CD4-positive, alpha-beta memory T cell (primary cell): ENCODE measurements at regions of chrX and their contacts with region 1.

Region 1: DNA sequence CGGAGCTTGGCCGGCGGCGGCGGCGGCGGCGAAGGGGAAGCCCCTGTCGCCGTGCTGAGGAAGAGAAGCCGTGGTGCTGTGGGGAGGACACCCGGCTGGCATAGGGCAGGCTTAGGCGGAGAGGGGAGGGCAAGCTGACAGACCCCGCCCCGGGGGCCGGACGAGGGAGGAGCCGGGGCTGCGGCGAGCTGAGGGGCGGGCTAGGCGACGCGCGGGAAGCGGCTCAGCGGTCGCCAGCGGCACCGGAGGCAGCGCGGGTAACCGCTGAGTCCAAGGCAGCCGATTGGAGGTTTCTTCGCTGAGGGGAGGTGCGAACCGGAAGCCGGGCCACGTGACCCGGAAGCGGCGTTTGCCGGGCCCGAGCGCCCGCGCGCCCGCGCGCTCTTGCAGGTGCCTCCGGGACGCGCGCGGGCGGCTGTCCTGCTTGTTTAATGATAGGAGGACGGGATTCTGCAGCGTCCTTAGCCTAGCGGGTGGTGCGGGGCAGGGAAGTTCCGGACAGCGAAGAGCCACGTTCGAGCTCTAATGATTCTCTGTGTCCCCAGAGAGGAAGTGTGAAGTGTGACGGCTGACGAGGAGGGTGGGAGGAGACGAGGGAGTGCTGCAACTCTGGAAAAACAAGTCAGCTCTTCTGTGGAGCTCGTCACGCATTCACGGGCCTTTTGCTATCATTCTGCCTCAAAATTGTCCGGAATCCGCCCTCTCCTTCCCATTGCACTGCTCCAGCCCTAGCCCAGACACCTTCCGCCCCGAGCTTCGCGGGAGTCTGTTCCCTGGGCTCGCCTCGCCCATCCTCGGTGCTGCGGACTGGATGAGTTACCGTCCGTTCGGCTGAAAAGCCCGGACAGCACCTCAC is at the start of gene AP1S2:
- DNase-seq: peak; percentile 93 to 100 (median 99)
- H3K4me3 ChIP-seq: peak within 1 kb of the TSS; percentile 57 to 77
- H3K4me3 Mint-ChIP-seq: peak within 1 kb of the TSS; percentile 91 to 98 (median 96)
- H3K27ac ChIP-seq: peak within 1 kb of the TSS; percentile 78
- H3K27ac Mint-ChIP-seq: peak within 1 kb of the TSS; percentile 96 to 99 (median 98)
- H3K4me1 ChIP-seq: peaks cover 19% of the 10 kb centered on the region
- H3K4me1 Mint-ChIP-seq: peaks cover 12 to 37% (median 21%) of the 10 kb centered on the region in 4 donors
- H3K27me3 ChIP-seq: no peaks in the 10 kb centered on the region
- H3K27me3 Mint-ChIP-seq: no peaks in the 10 kb centered on the region
- total RNA-seq, gene AP1S2: 23.9 to 26.4 TPM

Region 2: DNA sequence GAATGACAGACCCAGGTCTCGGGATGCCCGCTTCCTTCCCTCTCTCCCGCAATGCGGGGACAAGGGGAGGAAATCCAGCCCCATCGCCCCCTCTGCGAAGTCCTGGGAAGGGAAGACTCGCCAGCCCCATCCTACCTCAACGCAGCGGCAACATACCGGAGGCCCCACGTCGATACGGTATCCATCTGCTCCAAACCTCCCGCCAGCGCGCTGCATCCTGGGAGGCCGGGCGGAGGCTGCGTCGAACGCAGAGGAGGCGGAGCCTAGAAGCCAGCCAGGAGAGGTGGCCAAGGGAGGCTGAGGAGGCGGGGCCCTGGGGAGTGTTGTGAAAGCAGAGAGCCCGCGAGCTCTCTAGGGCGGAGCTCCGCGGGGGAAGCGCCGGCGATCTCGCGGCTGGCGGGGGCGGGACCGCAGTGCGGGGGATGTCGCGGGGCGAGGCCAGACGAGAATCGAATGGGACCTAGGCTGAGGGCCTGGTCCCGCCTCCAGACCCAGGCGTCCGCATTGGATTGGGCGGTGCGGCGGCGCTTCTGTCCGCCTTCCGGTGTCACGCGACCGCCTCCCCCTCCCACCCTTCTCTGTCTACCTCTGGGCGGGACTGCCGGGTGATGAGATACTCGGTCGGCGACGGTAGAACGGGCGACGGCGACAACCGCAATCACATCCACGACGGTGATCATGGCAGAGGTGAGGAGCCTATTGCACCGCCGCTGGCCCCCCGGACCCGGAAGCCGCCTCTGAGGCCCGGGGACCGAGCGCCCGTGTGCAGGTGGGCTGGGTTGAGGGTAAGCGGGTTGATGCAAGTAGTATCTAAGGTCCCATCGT is 981.9 kb before region 1 on chrX and contains the starts of genes FANCB and MOSPD2:
- CTCF ChIA-PET with region 1: no interaction called
- POLR2A ChIA-PET with region 1: no interaction called
- intact Hi-C with region 1: loop called (anchors 2 kb)
- DNase-seq: peak; percentile 89 to 96 (median 96)
- H3K4me3 ChIP-seq: peak within 1 kb of the TSS; percentile 76 to 77
- H3K4me3 Mint-ChIP-seq: peak within 1 kb of the TSS; percentile 83 to 92 (median 88)
- H3K27ac ChIP-seq: peak within 1 kb of the TSS; percentile 78
- H3K27ac Mint-ChIP-seq: peak within 1 kb of the TSS; percentile 79 to 93 (median 91)
- H3K4me1 ChIP-seq: peaks cover 12% of the 10 kb centered on the region
- H3K4me1 Mint-ChIP-seq: peaks cover 4 to 27% (median 9%) of the 10 kb centered on the region in 4 donors
- H3K27me3 ChIP-seq: no peaks in the 10 kb centered on the region
- H3K27me3 Mint-ChIP-seq: no peaks in the 10 kb centered on the region
- total RNA-seq, gene FANCB: 3.0 to 4.8 TPM
- total RNA-seq, gene MOSPD2: 14.0 to 15.2 TPM

Region 3: DNA sequence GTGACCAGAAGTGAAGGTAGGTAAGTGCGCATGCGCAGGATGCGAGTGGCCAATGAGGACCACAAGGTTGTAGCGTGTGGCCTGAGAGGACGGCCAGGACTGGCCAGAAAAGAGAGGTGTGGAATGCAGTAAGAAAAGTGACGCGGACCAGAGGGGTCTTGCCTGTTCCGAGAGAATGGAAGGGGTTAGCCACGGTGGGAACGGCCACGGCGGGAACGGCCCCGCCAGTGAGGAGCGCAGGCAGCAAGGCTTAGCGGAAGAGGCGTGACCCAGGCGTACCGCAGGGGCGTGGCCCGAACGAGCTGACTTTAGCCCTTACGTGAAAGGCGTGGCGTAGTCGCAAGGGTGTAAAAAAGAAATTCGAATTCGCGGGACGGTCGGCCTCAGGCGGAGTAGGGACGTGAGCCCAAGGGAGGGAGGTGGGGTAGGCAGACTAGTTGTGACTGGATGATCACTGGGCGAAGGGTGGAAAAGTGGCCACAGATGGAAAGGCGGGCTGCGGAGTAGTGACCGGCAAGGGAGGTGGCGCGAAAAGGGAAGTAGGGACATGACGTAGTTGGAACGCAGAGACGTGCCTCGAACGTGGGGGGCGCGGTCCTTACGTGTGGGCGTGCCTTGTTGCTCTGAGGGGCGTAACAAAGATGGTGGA is 180.0 kb before region 1 on chrX:
- CTCF ChIA-PET with region 1: no interaction called
- POLR2A ChIA-PET with region 1: interaction called, 10 read pairs
- intact Hi-C with region 1: loop called (anchors 1 kb)
- DNase-seq: peak; percentile 90 to 99 (median 98)
- H3K4me3 ChIP-seq: peak overlapping the region; percentile 88 to 92
- H3K4me3 Mint-ChIP-seq: no peak overlapping the region
- H3K27ac ChIP-seq: peak overlapping the region; percentile 100
- H3K27ac Mint-ChIP-seq: no peak overlapping the region
- H3K4me1 ChIP-seq: peaks cover 19% of the 10 kb centered on the region
- H3K4me1 Mint-ChIP-seq: peaks cover 8 to 20% (median 10%) of the 10 kb centered on the region in 4 donors
- H3K27me3 ChIP-seq: no peaks in the 10 kb centered on the region
- H3K27me3 Mint-ChIP-seq: no peaks in the 10 kb centered on the region

Region 4: DNA sequence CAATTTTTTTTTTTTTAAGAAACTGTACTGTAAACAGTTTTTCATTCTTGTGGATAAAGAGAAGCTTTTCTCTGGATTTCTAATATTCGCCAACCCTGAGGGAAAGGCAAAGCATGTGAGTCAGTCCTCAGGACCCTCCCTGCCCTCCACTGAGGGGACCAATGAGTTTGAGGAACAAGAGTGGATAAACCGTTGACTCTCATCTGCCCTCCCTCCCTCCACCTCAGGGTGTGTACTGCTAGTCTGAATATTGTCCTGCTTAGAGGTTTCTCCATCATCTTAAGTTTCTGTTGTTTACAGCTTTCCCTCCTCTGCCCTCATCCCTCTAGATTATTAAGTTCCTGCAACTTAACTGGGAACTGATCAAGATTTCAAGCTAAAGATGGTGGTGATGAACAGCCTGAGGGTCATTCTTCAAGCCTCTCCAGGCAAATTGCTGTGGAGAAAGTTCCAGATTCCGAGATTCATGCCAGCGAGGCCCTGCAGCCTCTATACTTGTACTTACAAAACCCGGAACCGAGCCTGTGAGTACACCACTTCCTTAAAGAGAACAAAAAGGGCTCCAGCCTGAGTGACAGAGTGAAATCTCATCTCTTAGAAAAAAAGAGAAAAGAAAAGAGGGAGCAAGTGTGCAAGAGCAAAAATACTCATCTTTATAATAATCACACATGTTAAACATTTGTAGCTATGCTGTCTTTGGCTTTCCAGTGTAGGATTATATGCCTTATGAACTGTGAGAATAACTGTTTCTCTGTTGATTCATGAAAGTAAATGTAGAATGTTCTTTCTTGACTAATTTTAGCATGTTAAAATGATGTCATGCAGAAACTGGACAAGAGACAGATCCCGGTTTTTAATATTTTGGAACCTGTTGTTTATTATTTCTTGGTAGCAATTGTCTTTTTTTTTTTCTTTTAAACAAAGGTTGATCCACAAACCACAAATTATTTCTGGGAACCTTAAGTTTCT is 105.0 kb before region 1 on chrX:
- CTCF ChIA-PET with region 1: no interaction called
- POLR2A ChIA-PET with region 1: interaction called, 14 read pairs
- intact Hi-C with region 1: loop called (anchors 5 kb)
- DNase-seq: peak; percentile 51 to 63 (median 60)
- H3K4me3 ChIP-seq: peak overlapping the region in 1 of 2 donors; percentile 23
- H3K4me3 Mint-ChIP-seq: peak overlapping the region; percentile 77 to 92 (median 84)
- H3K27ac ChIP-seq: peak overlapping the region; percentile 97
- H3K27ac Mint-ChIP-seq: peak overlapping the region; percentile 91 to 100 (median 97)
- H3K4me1 ChIP-seq: peaks cover 74% of the 10 kb centered on the region
- H3K4me1 Mint-ChIP-seq: peaks cover 58 to 96% (median 83%) of the 10 kb centered on the region in 4 donors
- H3K27me3 ChIP-seq: no peaks in the 10 kb centered on the region
- H3K27me3 Mint-ChIP-seq: no peaks in the 10 kb centered on the region

Region 5: DNA sequence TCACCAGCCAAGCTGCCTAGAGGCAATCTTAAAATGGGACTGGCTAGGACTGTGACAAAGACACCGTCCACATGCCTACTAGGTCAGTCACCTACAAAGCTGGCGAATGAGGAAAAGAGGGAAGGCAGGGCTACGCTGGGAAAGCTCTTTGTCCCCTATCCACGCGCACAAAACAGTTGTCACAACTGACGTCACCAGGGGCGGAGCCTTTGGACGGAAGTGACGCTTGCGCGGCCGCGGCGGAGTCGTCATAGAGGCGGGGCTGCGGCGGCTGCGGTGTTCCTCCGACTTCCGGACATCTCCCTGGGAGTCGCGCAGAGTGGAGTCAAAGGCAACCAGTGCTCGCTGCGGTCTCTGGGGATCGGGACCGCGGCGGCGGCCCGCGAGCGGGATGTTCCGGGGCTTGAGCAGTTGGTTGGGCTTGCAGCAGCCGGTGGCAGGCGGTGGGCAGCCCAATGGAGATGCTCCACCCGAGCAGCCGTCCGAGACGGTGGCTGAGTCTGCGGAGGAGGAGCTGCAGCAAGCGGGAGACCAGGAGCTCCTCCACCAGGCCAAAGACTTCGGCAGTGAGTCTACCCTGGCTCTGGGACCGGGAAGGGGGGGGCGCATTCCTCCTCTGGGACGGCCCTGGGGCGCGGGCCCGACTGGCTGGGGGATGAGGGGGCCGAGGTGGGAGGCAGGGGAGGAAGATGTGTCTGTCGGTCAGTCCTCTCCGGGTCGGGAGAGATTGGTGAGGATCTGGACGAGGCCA is 864.6 kb after region 1 on chrX and contains the start of gene SYAP1:
- CTCF ChIA-PET with region 1: no interaction called
- POLR2A ChIA-PET with region 1: interaction called, 8 read pairs
- intact Hi-C with region 1: loop called (anchors 10 kb)
- DNase-seq: peak; percentile 91 to 100 (median 97)
- H3K4me3 ChIP-seq: peak within 1 kb of the TSS; percentile 54 to 84
- H3K4me3 Mint-ChIP-seq: peak within 1 kb of the TSS; percentile 89 to 99 (median 95)
- H3K27ac ChIP-seq: peak within 1 kb of the TSS; percentile 95
- H3K27ac Mint-ChIP-seq: peak within 1 kb of the TSS; percentile 99 to 100 (median 99)
- H3K4me1 ChIP-seq: peaks cover 8% of the 10 kb centered on the region
- H3K4me1 Mint-ChIP-seq: peaks cover 13 to 55% (median 37%) of the 10 kb centered on the region in 4 donors
- H3K27me3 ChIP-seq: no peaks in the 10 kb centered on the region
- H3K27me3 Mint-ChIP-seq: no peaks in the 10 kb centered on the region
- total RNA-seq, gene SYAP1: 13.9 to 15.4 TPM

Region 6: GRCh38 chrX:17736856-17737706 is 1882.1 kb after region 1 on chrX and contains the start of gene SCML1:
- CTCF ChIA-PET with region 1: no interaction called
- POLR2A ChIA-PET with region 1: no interaction called
- intact Hi-C with region 1: loop called (anchors 10 kb)
- DNase-seq: peak; percentile 78 to 90 (median 82)
- H3K4me3 ChIP-seq: peak within 1 kb of the TSS in 1 of 2 donors; percentile 50
- H3K4me3 Mint-ChIP-seq: peak within 1 kb of the TSS; percentile 86 to 97 (median 90)
- H3K27ac ChIP-seq: peak within 1 kb of the TSS; percentile 73
- H3K27ac Mint-ChIP-seq: peak within 1 kb of the TSS; percentile 86 to 98 (median 90)
- H3K4me1 ChIP-seq: peaks cover 15% of the 10 kb centered on the region
- H3K4me1 Mint-ChIP-seq: peaks cover 11 to 33% (median 22%) of the 10 kb centered on the region in 4 donors
- H3K27me3 ChIP-seq: no peaks in the 10 kb centered on the region
- H3K27me3 Mint-ChIP-seq: peaks cover 0 to 3% of the 10 kb centered on the region in 2 donors
- total RNA-seq, gene SCML1: 14.4 to 18.0 TPM